CD8-positive, alpha-beta T cell (primary cell): ENCODE measurements at regions of chr7 and their contacts with region 1.

Region 1: GRCh38 chr7:24842449-24843241 is 85.4 kb upstream of the GSDME start:
- DNase-seq: no peak
- ATAC-seq: no peak
- H3K4me3 ChIP-seq: no peak overlapping the region
- H3K4me3 Mint-ChIP-seq: no peak overlapping the region
- H3K27ac ChIP-seq: no peak overlapping the region
- H3K27ac Mint-ChIP-seq: peak overlapping the region; percentile 28
- H3K4me1 ChIP-seq: no peaks in the 10 kb centered on the region
- H3K4me1 Mint-ChIP-seq: peaks cover 3% of the 10 kb centered on the region
- H3K27me3 ChIP-seq: no peaks in the 10 kb centered on the region
- H3K27me3 Mint-ChIP-seq: no peaks in the 10 kb centered on the region
- CTCF ChIP-seq: no peak

Region 2: GRCh38 chr7:24669971-24670591 is 172.6 kb before region 1 on chr7:
- CTCF ChIA-PET with region 1: no interaction called
- POLR2A ChIA-PET with region 1: no interaction called
- intact Hi-C with region 1: no loop called
- DNase-seq: no peak
- ATAC-seq: no peak
- H3K4me3 ChIP-seq: no peak overlapping the region
- H3K4me3 Mint-ChIP-seq: no peak overlapping the region
- H3K27ac ChIP-seq: no peak overlapping the region
- H3K27ac Mint-ChIP-seq: no peak overlapping the region
- H3K4me1 ChIP-seq: no peaks in the 10 kb centered on the region
- H3K4me1 Mint-ChIP-seq: no peaks in the 10 kb centered on the region
- H3K27me3 ChIP-seq: no peaks in the 10 kb centered on the region
- H3K27me3 Mint-ChIP-seq: no peaks in the 10 kb centered on the region
- CTCF ChIP-seq: no peak

Region 3: DNA sequence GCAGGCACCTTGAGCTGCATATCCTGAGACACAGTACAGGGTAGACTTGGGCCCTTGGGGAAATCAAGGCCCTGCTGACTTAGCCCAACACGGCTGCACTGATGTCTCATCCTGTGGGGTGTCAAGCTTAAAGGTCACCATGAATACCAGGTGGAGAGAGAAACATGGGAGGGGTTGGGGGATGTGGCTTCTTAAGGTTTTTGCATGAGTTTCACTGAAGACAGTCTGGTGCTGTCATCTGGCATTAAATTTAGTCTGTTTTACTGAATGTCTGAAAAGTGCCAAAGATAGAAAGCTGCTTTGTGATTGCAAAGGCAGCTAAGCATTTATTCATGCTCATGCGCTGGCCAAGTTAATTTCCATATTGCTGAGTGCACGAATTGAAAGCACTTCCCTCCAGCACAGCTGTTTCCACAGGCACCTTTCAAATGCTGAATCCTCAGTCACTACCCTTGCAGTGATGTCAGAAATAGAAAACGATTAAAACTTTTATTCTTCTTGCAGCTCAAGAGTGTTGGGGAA is 35.2 kb after region 1 on chr7:
- CTCF ChIA-PET with region 1: no interaction called
- POLR2A ChIA-PET with region 1: no interaction called
- intact Hi-C with region 1: loop called in 1 of 2 experiments (anchors 5 kb)
- DNase-seq: no peak
- ATAC-seq: no peak
- H3K4me3 ChIP-seq: no peak overlapping the region
- H3K4me3 Mint-ChIP-seq: no peak overlapping the region
- H3K27ac ChIP-seq: no peak overlapping the region
- H3K27ac Mint-ChIP-seq: no peak overlapping the region
- H3K4me1 ChIP-seq: no peaks in the 10 kb centered on the region
- H3K4me1 Mint-ChIP-seq: peaks cover 6% of the 10 kb centered on the region
- H3K27me3 ChIP-seq: no peaks in the 10 kb centered on the region
- H3K27me3 Mint-ChIP-seq: no peaks in the 10 kb centered on the region
- CTCF ChIP-seq: no peak

Region 4: DNA sequence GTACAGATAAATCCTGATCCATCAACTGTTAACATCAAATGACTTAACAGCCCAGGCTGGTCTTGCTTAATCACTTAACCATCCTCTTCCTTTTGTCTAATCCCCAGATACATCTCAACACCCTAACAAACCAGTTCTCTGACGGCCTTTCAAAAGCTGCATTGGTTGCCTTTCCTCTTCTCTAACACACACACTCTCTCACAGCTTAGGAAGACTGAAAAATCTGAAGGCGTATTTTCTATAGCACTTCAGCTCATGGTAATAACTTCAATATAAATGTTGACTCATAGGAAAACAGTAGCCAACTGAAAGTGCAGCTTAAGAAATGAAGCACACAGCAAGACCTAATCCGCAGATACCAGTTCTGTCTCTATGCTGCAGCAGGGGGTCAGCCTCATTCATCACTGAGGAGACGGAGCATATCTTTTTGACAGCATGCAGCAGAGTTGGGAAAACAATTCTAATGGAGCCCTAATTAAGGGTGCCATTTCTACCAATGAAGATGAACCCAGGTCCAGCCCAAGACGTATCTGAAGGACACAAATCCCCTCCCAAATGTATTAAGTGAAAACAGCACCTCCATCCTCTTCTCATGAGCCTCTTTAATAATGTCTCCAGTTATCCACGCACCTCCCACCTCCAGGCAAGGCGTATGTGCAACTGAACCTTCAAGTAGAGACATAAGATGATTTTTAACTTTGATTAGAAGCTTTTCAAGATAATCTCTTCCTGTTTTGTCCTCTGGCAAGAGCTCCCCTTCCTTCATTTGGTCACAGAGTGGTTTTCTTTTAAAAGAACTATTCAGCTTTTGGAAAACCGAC is 1097.7 kb after region 1 on chr7:
- CTCF ChIA-PET with region 1: no interaction called
- POLR2A ChIA-PET with region 1: no interaction called
- intact Hi-C with region 1: no loop called
- DNase-seq: no peak
- ATAC-seq: no peak
- H3K4me3 ChIP-seq: no peak overlapping the region
- H3K4me3 Mint-ChIP-seq: no peak overlapping the region
- H3K27ac ChIP-seq: no peak overlapping the region
- H3K27ac Mint-ChIP-seq: no peak overlapping the region
- H3K4me1 ChIP-seq: peaks cover 7% of the 10 kb centered on the region
- H3K4me1 Mint-ChIP-seq: peaks cover 11% of the 10 kb centered on the region
- H3K27me3 ChIP-seq: no peaks in the 10 kb centered on the region
- H3K27me3 Mint-ChIP-seq: peaks cover 21% of the 10 kb centered on the region
- CTCF ChIP-seq: no peak